ENCODE measurements at regions of chr4 and their contacts with region 1.

Region 1: GRCh38 chr4:148415500-148415899 is 26.7 kb downstream of the NR3C2 start:
- DNase-seq: no peak
- H3K4me3 ChIP-seq: no peak overlapping the region
- H3K4me3 Mint-ChIP-seq: no peak overlapping the region
- H3K27ac Mint-ChIP-seq: no peak overlapping the region
- H3K4me1 ChIP-seq: no peaks in the 10 kb centered on the region
- H3K4me1 Mint-ChIP-seq: no peaks in the 10 kb centered on the region
- H3K27me3 ChIP-seq: no peaks in the 10 kb centered on the region
- H3K27me3 Mint-ChIP-seq: peaks cover 5% of the 10 kb centered on the region
- CTCF ChIP-seq: no peak

Region 2: DNA sequence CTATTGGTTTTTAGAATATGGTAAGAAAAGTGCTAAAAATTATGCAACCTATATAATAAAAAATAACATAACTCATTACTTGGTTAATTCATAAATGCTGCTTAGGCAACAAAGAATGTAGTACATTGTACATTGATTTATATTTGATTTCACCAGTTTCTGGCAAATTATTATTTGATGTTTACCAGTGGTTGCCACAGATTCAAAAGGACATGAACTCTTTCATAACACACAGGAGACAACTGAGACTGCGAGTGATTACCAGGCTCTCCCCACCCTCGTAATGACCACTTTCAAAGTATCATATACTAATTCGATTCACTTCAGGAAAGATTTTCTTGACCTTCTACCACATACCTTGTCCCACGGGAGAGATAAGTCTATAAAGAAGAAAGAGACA is 131.8 kb before region 1 on chr4:
- CTCF ChIA-PET with region 1: no interaction called
- POLR2A ChIA-PET with region 1: no interaction called
- intact Hi-C with region 1: loop called (anchors 1 kb)
- DNase-seq: no peak
- H3K4me3 ChIP-seq: no peak overlapping the region
- H3K4me3 Mint-ChIP-seq: no peak overlapping the region
- H3K27ac Mint-ChIP-seq: no peak overlapping the region
- H3K4me1 ChIP-seq: no peaks in the 10 kb centered on the region
- H3K4me1 Mint-ChIP-seq: no peaks in the 10 kb centered on the region
- H3K27me3 ChIP-seq: no peaks in the 10 kb centered on the region
- H3K27me3 Mint-ChIP-seq: peaks cover 5% of the 10 kb centered on the region
- CTCF ChIP-seq: no peak

Region 3: DNA sequence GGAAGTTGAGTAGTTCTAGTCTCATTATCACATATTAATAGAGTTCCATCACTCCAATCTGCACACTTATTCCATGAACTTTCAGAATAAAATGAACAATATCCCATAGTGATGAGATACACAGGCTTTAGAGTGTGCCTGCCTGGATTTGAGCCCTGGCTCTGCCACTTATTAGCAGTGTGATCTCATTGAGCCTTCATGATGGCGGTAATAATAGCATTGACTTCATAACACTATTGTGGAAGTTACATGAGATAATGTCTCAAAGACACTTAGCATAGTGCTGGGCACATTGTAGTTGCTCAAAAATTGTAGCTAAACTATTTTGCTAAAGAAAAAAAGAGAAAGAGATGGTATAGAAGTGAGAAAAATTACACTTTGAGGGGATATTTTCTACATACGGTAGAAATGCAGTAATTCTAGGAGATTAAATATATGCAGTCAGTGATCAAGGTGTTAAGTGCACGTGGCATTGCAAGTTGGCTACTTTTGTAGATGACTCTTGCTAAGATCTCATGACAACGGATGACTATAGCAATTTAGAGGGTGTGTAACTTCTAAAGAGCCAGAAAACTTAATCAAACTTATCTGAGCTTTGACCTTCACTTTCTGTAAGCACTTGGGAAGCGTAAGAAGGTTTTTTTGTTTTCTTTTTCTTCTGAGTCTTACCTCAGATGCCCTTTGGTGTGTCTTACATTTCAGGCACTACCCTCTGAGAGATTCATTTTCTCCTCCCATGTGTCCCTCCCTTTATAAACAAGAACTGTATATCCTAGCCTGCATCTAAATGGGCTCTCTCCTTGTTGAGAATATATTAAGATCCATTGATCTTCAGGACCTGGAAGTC is 407.3 kb after region 1 on chr4:
- CTCF ChIA-PET with region 1: no interaction called
- POLR2A ChIA-PET with region 1: no interaction called
- intact Hi-C with region 1: no loop called
- DNase-seq: no peak
- H3K4me3 ChIP-seq: no peak overlapping the region
- H3K4me3 Mint-ChIP-seq: no peak overlapping the region
- H3K27ac Mint-ChIP-seq: no peak overlapping the region
- H3K4me1 ChIP-seq: 0 out of 2 replicates have a peak, but pooled peaks cover 3% of the 10 kb centered on the region
- H3K4me1 Mint-ChIP-seq: no peaks in the 10 kb centered on the region
- H3K27me3 ChIP-seq: no peaks in the 10 kb centered on the region
- H3K27me3 Mint-ChIP-seq: no peaks in the 10 kb centered on the region
- CTCF ChIP-seq: no peak